HEK293 (cell line): ENCODE measurements at regions of chr17 and their contacts with region 1.

Region 1: DNA sequence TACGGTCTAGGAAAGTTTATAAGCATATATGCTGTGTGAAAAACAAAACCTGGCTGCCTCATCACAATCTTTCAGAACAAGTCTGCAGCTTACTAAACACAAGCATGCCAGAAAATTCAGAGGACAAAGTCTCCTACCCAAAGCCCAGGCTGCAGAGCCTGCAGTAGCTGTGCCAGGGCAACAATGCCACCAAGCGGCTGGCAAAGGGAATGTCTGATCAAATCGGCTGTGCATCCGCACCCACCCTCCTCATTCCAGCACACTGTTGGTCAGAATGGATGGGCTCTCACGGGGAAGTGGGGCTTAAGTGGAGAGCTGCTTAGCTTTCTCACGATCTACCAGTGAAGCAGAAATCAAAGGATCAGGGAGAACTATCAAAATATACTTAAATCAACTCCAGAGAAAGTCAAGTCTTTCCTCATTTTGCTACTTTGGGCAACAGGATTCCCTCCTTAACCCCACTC is 73.5 kb downstream of the CYTH1 start:
- H3K4me3 ChIP-seq: no peak overlapping the region
- H3K27ac ChIP-seq: no peak overlapping the region
- H3K4me1 ChIP-seq: peaks cover 16% of the 10 kb centered on the region
- CTCF ChIP-seq: peak; percentile 80

Region 2: GRCh38 chr17:78488867-78489634 is 219.5 kb before region 1 on chr17:
- CTCF ChIA-PET with region 1: interaction called, 32 read pairs
- POLR2A ChIA-PET with region 1: interaction called, 5 read pairs
- H3K4me3 ChIP-seq: no peak overlapping the region
- H3K27ac ChIP-seq: no peak overlapping the region
- H3K4me1 ChIP-seq: no peaks in the 10 kb centered on the region
- CTCF ChIP-seq: no peak

Region 3: GRCh38 chr17:78600181-78600721 is 108.3 kb before region 1 on chr17:
- CTCF ChIA-PET with region 1: interaction called, 32 read pairs
- POLR2A ChIA-PET with region 1: no interaction called
- H3K4me3 ChIP-seq: no peak overlapping the region
- H3K27ac ChIP-seq: no peak overlapping the region
- H3K4me1 ChIP-seq: 0 out of 2 replicates have a peak, but pooled peaks cover 4% of the 10 kb centered on the region
- CTCF ChIP-seq: no peak

Region 4: GRCh38 chr17:78679495-78680390 is 28.8 kb before region 1 on chr17:
- CTCF ChIA-PET with region 1: interaction called, 18 read pairs
- POLR2A ChIA-PET with region 1: no interaction called
- H3K4me3 ChIP-seq: no peak overlapping the region
- H3K27ac ChIP-seq: no peak overlapping the region
- H3K4me1 ChIP-seq: no peaks in the 10 kb centered on the region
- CTCF ChIP-seq: no peak

Region 5: DNA sequence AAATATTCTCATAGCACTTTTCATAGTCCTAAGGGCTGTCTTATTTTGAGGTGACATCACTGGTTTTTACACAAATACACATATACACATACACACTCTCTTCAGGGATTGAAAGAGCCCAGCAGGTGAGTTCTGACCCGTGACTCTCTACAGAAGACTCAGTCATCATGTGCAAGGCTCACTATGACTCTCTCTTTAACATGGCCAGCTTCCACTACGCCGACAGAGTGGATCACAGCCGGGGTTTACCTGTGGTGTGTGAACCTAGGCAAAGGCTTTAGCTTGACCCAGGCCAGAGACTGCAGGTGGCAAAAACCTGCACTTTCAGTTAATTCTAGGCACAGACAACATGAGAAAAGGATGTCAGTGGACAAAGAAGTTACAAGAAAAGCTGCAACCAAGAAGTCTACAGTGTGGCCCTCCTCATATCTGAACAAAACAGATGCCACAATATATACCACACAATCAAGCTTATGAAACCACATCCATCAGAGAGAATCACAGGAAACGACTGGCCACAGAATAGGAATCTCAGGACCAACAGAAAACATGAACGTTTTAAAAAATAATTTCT is 17.0 kb after region 1 on chr17:
- CTCF ChIA-PET with region 1: interaction called, 10 read pairs
- POLR2A ChIA-PET with region 1: no interaction called
- H3K4me3 ChIP-seq: no peak overlapping the region
- H3K27ac ChIP-seq: no peak overlapping the region
- H3K4me1 ChIP-seq: peaks cover 25% of the 10 kb centered on the region
- CTCF ChIP-seq: no peak

Region 6: DNA sequence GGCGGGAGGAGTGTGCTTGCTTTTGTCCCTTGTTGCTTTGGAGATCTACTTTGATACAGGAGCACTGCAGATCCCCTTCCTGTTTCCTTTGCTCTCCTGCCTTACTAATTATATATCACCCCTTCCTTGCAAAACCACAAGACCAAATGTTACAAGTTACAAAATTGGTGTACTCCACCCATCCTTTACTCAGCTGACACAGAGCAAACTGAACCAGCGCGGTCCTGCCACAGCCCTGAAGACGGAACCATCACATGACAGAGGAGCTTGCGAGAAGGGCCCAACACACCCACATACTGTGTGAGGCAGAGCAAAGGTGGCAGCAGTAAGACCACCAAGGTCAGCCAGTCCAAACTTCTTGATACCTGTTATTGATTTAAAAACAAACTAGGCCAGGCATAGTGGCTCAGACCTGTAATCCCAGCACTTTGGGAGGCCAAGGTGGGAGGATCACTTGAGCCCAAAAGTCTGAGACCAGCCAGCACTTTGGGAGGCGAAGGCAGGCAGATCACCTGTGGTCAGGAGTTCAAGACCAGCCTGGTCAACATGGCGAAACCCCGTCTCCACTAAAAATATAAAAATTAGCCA is 40.3 kb after region 1 on chr17:
- CTCF ChIA-PET with region 1: interaction called, 36 read pairs
- POLR2A ChIA-PET with region 1: no interaction called
- H3K4me3 ChIP-seq: no peak overlapping the region
- H3K27ac ChIP-seq: no peak overlapping the region
- H3K4me1 ChIP-seq: peaks cover 7% of the 10 kb centered on the region
- CTCF ChIP-seq: no peak